GM12878 (cell line): ENCODE measurements at regions of chr13 and their contacts with region 1.

Region 1: DNA sequence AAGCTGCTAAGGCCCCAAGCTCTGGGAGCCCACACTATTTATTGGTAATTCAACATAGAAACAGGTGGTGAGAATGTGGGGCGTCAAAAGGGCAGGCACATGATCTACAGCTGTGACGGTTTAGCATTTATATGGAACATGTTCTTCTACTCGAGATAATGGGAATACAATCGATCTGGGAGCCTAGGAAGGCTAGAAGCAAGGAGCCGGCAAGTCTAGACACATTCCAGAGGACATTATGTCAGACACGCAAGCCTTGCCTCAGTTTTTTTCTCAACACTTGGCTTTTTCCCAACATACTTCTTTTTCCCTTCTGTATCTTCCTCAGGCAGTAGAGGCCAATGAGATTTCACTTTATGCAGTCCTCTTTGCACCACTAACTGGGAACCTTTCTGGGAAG is 315.7 kb upstream of the SLITRK5 start:
- DNase-seq: no peak
- ATAC-seq: no peak
- H3K4me3 ChIP-seq: no peak overlapping the region
- H3K27ac ChIP-seq: no peak overlapping the region
- H3K4me1 ChIP-seq: no peaks in the 10 kb centered on the region
- H3K27me3 ChIP-seq: no peaks in the 10 kb centered on the region
- CTCF ChIP-seq: no peak
- EP300 ChIP-seq: no peak
- POLR2A ChIP-seq: no peak
- RAD21 ChIP-seq: no peak

Region 2: DNA sequence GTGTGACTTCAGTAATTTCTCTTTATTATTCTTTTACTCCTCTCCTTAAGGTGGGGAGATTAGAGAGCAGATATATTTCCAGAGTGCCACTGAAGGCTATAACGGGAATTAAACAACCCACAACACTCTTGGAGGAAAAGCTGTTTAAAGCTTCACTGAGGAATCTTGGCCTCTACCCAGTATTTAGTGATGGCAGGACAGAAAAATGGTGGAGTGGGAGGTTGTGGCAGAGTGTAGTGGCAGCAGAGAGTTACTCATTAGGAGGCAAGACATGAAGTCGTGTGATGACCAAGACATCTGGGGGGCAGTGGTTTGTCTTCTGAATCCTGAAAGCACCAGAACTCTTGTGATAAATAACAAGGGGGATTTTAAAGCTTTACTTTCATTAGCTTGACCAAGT is 247.8 kb before region 1 on chr13:
- CTCF ChIA-PET with region 1: no interaction called
- POLR2A ChIA-PET with region 1: no interaction called
- RAD21 ChIA-PET with region 1: no interaction called
- SMC1A ChIA-PET with region 1: no interaction called
- in situ Hi-C with region 1: no loop called
- intact Hi-C with region 1: no loop called
- DNase-seq: no peak
- ATAC-seq: no peak
- H3K4me3 ChIP-seq: no peak overlapping the region
- H3K27ac ChIP-seq: no peak overlapping the region
- H3K4me1 ChIP-seq: no peaks in the 10 kb centered on the region
- H3K27me3 ChIP-seq: no peaks in the 10 kb centered on the region
- CTCF ChIP-seq: no peak
- EP300 ChIP-seq: no peak
- POLR2A ChIP-seq: no peak
- RAD21 ChIP-seq: no peak

Region 3: GRCh38 chr13:87333599-87333998 is 21.9 kb before region 1 on chr13:
- CTCF ChIA-PET with region 1: no interaction called
- POLR2A ChIA-PET with region 1: no interaction called
- RAD21 ChIA-PET with region 1: no interaction called
- SMC1A ChIA-PET with region 1: interaction called, 6 read pairs
- in situ Hi-C with region 1: no loop called
- intact Hi-C with region 1: loop called (anchors 1 kb)
- DNase-seq: no peak
- ATAC-seq: no peak
- H3K4me3 ChIP-seq: no peak overlapping the region
- H3K27ac ChIP-seq: no peak overlapping the region
- H3K4me1 ChIP-seq: no peaks in the 10 kb centered on the region
- H3K27me3 ChIP-seq: no peaks in the 10 kb centered on the region
- CTCF ChIP-seq: no peak
- EP300 ChIP-seq: no peak
- POLR2A ChIP-seq: no peak
- RAD21 ChIP-seq: no peak

Region 4: DNA sequence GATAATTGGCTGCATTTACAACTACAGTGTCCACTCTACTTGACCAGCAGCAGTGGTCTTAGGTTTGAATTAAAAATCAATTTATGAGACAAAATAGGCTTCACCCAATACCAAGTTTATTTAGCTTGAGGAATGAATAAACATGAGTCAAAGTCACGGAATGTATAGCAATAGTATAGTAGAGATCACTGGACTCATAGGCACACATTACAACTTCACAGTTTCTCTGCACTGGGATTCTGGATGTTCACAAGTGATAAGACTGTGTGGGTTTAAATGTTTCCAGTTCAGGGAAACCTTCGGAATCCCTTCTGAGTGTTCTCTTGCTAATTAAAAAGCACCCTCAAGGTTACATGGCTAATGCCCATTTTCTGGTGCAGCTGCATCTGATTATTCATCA is 1380.6 kb after region 1 on chr13:
- CTCF ChIA-PET with region 1: no interaction called
- POLR2A ChIA-PET with region 1: no interaction called
- RAD21 ChIA-PET with region 1: no interaction called
- SMC1A ChIA-PET with region 1: no interaction called
- in situ Hi-C with region 1: no loop called
- intact Hi-C with region 1: no loop called
- DNase-seq: no peak
- ATAC-seq: no peak
- H3K4me3 ChIP-seq: no peak overlapping the region
- H3K27ac ChIP-seq: no peak overlapping the region
- H3K4me1 ChIP-seq: no peaks in the 10 kb centered on the region
- H3K27me3 ChIP-seq: no peaks in the 10 kb centered on the region
- CTCF ChIP-seq: no peak
- EP300 ChIP-seq: no peak
- POLR2A ChIP-seq: no peak
- RAD21 ChIP-seq: no peak